HepG2 (cell line): ENCODE measurements at regions of chr3 and their contacts with region 1.

Region 1: GRCh38 chr3:171772427-171773056 is 37.7 kb downstream of the PLD1 start:
- DNase-seq: peak; percentile 46
- ATAC-seq: peak; percentile 48
- H3K4me3 ChIP-seq: no peak overlapping the region
- H3K27ac ChIP-seq: no peak overlapping the region
- H3K4me1 ChIP-seq: peaks cover 52% of the 10 kb centered on the region
- H3K27me3 ChIP-seq: no peaks in the 10 kb centered on the region
- CTCF ChIP-seq: peak; percentile 69
- EP300 ChIP-seq: no peak
- POLR2A ChIP-seq: no peak
- RAD21 ChIP-seq: peak; percentile 45; the same call in 1 of the 2 replicates

Region 2: DNA sequence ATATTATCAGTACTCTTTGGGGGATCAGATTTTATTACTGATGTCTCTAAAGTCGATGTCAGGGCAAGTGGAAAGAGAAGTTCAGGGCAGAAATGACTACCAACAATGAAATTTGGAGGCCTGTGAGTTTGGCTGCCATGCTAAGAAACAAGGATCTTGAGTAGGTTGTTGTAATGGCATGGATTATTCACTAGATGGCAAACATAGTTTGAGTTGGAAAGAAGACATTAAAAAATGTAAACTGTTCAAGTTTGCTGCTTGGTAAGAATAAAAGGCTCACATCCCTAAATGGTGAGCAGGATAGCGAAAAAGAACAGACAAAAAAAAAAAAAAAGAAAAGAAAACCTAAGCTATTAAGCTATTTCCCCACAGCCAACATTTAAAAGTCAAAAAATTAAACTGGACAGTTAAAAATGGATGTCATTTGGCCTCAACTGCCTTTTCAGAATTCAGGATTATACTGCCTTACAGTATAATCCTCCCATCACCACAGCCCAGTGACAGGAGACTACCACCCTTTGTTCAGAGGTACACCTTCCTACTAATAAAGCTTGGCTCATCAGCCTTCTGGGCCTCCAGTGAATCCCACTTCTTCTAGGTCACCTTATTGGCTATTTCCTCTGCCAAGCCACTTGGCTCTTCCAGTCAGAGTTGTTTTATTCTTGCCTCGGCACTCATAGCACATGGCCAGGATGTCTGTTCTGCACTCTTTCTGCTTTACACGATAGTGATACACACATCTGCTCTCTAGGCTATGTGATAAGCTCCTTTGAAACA is 126.0 kb before region 1 on chr3:
- CTCF ChIA-PET with region 1: interaction called, 4 read pairs
- POLR2A ChIA-PET with region 1: no interaction called
- in situ Hi-C with region 1: no loop called
- intact Hi-C with region 1: loop called (anchors 1 kb)
- DNase-seq: peak; percentile 7
- ATAC-seq: peak; percentile 38; the same call in 2 of the 3 replicates
- H3K4me3 ChIP-seq: no peak overlapping the region
- H3K27ac ChIP-seq: no peak overlapping the region
- H3K4me1 ChIP-seq: no peaks in the 10 kb centered on the region
- H3K27me3 ChIP-seq: no peaks in the 10 kb centered on the region
- CTCF ChIP-seq: peak; percentile 38
- EP300 ChIP-seq: no peak
- POLR2A ChIP-seq: no peak
- RAD21 ChIP-seq: no peak

Region 3: DNA sequence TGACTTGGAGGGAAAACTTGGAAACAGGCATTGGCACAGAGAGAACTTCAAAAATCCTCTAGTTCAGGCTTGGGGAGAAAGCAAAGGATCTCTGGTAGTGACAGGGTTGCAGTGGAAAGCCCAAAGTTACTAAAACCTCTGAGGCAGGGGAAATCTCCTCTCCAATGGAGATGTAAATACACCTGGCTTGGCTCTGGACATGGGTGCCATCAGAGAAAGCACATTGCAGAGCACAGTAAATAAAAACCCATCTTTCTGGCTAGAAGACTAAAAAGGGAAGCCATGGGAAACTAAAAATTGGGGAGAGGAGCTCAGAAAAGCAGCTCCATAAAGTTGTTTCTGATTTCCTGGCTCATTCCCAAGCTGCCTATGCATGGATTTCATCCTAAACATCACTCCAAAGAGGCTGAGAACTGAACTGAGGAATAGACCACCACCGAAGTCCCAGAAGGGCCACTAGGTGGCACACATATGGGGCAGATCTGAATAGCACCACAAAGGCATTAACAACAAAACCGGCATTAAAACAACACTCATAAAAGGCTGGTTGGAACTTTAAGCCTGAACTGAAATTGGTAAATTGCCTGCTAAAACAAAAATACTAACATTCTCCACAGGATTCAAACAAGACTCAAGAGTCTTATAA is 68.7 kb before region 1 on chr3:
- CTCF ChIA-PET with region 1: interaction called, 3 read pairs
- POLR2A ChIA-PET with region 1: no interaction called
- in situ Hi-C with region 1: no loop called
- intact Hi-C with region 1: loop called (anchors 10 kb)
- DNase-seq: peak; percentile 9
- ATAC-seq: no peak; the same call in 2 of the 3 replicates
- H3K4me3 ChIP-seq: no peak overlapping the region
- H3K27ac ChIP-seq: no peak overlapping the region
- H3K4me1 ChIP-seq: no peaks in the 10 kb centered on the region
- H3K27me3 ChIP-seq: no peaks in the 10 kb centered on the region
- CTCF ChIP-seq: 0 out of 2 replicates have a peak, but pooled peaks have one; percentile 26
- EP300 ChIP-seq: no peak
- POLR2A ChIP-seq: no peak
- RAD21 ChIP-seq: no peak